AG04449 (cell line): ENCODE measurements at regions of chr9 and their contacts with region 1.

Region 1: DNA sequence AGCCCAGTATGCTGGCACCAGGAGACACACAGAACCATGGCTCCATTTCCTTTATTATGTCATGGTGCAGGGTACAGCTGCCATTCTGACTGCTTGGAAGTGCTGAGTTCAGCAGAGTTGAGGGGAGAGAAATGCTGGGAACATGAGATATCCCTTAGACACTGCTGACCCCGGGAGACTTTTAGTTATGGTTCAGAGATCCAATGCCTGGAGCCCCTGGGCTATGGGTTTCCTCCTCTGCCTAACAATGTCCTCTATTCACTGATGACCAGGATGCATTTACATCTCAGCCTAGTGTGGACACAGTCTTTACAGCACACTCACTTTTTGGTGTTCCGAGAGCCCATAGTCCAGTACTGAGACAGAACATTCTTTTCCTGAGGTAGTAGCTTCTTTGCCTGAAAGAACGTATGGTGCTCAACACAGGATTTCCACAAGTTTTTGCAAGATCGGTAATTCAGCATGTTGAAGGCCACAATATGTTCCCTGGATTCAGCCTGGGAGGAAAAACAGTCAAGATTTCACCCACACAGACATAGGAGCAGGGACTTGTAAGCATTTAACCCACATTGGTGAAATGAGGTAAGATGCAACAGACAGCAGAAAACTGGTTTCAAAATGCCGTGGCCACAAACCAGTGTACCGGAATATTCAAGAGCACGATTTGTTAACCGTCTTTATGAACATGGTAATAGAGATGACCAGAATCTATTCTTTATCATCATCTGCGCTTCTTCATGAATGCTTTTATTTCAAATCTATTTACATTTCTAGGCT is 71.3 kb downstream of the PTPN3 start:
- DNase-seq: no peak
- H3K4me3 ChIP-seq: no peak overlapping the region
- CTCF ChIP-seq: no peak

Region 2: DNA sequence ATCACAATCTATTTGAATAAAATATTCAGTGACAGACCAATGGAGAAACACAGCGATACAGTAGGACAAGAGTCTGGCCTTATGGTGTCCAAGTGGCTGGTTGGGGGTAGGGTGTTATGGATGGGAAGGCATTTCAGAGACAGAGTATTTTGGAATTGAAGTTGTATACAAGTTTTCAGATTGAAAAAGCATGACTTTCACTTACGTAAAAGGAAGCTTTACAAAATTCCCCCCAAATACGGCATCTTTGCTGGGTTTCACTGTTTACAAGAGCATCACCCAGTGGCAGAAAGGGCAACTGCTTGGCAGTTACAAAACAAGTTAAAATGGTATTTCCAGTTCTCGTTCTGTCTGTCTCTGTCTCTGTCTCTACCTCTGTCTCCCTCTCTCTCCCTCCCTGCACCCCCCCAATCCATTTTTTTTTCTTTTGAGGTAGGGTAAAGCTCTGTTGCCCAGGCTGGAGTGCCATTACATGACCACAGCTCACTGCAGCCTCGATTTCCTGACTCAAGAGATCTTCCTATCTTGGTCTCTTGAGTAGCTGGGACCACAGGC is 14.9 kb before region 1 on chr9:
- CTCF ChIA-PET with region 1: interaction called, 11 read pairs
- POLR2A ChIA-PET with region 1: no interaction called
- DNase-seq: peak; percentile 7
- H3K4me3 ChIP-seq: no peak overlapping the region
- CTCF ChIP-seq: peak; percentile 66

Region 3: GRCh38 chr9:109477258-109478050 is 50.6 kb after region 1 on chr9:
- CTCF ChIA-PET with region 1: no interaction called
- POLR2A ChIA-PET with region 1: no interaction called
- DNase-seq: no peak
- H3K4me3 ChIP-seq: no peak overlapping the region
- CTCF ChIP-seq: no peak

Region 4: DNA sequence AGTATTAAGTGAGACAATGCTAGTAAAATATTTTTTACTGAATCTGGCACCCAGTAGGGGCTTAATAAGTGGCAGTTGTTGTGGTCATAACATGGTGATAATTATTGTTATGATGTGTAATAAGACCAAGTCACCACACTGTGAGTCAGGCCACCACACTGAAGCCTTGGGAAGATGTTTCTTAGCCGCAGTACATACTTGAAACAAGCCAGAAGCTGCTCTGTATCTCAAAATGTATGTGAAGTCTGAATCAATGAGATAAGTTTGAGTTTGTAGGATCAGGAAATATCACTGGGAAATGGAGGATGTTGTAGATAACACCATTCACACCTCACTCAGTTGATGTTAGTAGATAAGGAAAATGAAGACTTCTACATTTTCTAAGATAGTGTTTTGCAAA is 122.6 kb after region 1 on chr9:
- CTCF ChIA-PET with region 1: no interaction called
- POLR2A ChIA-PET with region 1: no interaction called
- DNase-seq: no peak
- H3K4me3 ChIP-seq: no peak overlapping the region
- CTCF ChIP-seq: no peak